Stomach (tissue), 19 donors: ENCODE measurements at regions of chr1 and their contacts with region 1.

Region 1: DNA sequence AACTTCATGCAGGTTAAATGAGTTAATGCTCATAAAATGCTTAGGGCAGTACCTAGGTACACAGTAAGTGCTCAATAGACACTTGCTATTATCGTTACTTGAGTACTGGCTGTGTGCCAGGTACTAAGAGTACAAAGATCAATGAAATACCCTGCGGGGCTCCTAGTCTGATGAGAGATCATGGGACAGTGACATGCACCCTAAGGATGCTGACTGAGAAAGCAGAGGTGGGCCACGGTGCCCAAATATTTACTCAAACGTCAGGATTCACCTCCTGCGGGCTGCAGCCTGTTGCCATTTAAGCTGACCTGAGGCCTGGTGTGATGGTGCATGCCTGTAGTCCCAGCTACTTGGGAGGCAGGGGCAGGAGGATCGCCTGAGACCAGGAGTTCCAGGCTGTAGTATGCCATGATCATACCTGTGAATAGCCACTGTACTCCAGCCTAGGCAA is 19.8 kb upstream of the LUZP1 start:
- DNase-seq: no peak
- H3K4me3 ChIP-seq: no peak overlapping the region
- H3K27ac ChIP-seq: no peak overlapping the region
- H3K4me1 ChIP-seq: peaks cover 0 to 8% (median 6%) of the 10 kb centered on the region in 4 donors
- H3K27me3 ChIP-seq: no peaks in the 10 kb centered on the region
- CTCF ChIP-seq: no peak
- EP300 ChIP-seq: no peak
- POLR2A ChIP-seq: no peak

Region 2: DNA sequence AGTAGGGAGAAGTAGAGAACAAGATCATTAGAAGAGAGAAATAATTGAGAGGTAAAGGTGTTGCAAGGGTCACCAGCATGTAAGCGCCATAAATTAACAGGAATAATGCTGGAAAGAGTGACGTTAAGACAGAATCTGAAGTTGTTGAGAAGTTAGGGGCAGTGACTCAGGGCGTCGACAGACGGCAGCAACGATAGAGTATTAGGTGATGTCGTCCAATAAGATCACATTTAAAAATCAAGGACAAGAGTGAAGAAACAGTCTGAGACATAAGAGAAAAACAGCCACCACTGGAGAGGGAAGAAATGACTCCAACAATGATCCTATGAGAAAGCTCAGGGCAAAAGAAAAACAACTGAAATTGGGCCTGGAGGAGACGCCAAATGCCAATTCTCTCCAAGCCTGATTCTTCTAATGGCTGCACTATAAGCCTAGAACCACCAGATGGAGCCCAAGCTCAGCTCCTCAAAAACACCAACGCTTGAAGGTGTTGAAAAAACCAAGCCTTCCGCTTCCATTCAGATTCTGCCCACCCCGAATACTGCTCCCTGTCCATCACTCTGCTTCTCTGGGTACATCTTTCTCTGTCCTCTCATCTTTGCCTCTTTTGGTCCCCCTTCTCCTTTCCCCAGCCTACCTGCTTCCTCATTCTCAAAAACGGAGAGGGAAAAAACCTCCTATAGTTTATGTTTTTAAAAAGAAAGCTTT is 89.8 kb before region 1 on chr1:
- intact Hi-C with region 1: loop called (anchors 5 kb)
- DNase-seq: peak; percentile 66 to 90
- H3K4me3 ChIP-seq: no peak overlapping the region
- H3K27ac ChIP-seq: peak overlapping the region in 1 of 5 donors; percentile 44
- H3K4me1 ChIP-seq: peaks cover 16 to 58% (median 42%) of the 10 kb centered on the region in 4 donors
- H3K27me3 ChIP-seq: no peaks in the 10 kb centered on the region
- CTCF ChIP-seq: peak in 5 of 7 experiments; percentile 86 to 92 (median 88)
- EP300 ChIP-seq: no peak
- POLR2A ChIP-seq: no peak